Dorsolateral prefrontal cortex (tissue), 120 donors: ENCODE measurements at regions of chr16 and their contacts with region 1.

Region 1: GRCh38 chr16:89490387-89491237 is at the start of gene ANKRD11:
- DNase-seq: peak; percentile 99 to 100 (median 100)
- H3K4me3 ChIP-seq: peak within 1 kb of the TSS; percentile 59 to 100 (median 93)
- H3K27ac ChIP-seq: peak within 1 kb of the TSS in 58 of 59 donors; percentile 5 to 96 (median 87)
- H3K27me3 ChIP-seq: no peaks in the 10 kb centered on the region
- CTCF ChIP-seq: peak in 26 of 56 donors; percentile 6 to 57 (median 22)
- total RNA-seq, gene ANKRD11: 131 to 216 (median 167) TPM

Region 2: DNA sequence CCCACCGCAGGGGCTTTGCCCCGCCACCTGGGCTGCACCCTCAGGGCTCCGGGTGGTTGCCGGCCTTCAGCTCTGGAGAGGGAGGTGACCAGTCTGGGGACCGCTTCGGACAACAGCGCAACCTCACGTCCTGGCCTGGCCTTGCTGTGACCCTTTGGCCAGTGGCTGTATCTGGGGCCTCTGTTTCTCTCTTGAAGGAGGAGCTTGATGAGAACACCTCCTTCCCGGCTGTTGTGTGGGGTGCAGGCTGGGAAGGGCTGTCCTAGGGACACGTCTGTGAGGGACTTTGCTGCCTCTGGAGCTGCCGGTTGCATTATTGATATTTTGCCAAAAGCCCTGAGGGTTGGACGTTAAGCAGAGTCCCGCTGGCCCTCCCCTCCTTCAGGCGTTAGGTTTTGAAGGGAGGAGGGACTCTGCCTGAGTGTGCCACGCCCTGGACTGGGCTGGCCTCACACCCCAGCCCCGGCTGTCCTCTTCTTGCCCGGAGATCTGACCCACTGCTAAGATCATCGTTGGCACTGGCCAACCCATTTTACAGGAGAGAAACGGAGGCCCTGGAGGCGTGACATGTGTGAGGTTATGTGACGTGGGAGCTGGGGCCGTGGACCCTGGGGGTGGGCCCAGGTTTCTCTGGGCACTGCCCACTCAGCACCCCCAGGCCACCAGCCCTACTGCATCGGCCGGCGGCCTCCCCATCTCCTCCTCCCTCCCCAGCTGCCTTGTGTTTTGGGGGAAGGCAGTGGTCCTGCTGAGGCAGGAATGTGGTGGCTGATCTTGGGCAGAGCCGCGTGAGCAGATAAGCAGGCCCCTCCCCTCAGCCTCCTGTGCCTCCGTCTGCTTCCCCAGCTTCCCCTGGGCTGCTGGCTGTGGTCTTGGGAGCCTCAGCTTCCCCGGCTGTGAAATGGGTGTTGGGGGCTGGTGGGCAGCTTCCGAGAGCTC is 1029.0 kb before region 1 on chr16:
- intact Hi-C with region 1: no loop called
- DNase-seq: no peak
- H3K4me3 ChIP-seq: no peak overlapping the region
- H3K27ac ChIP-seq: no peak overlapping the region
- H3K27me3 ChIP-seq: peaks cover 0 to 2% (median 0%) of the 10 kb centered on the region in 45 donors
- CTCF ChIP-seq: no peak

Region 3: GRCh38 chr16:89330177-89330856 is 160.3 kb before region 1 on chr16:
- intact Hi-C with region 1: loop called (anchors 1 to 5 kb)
- DNase-seq: peak in 2 of 10 donors; percentile 25 to 42
- H3K4me3 ChIP-seq: peak overlapping the region in 18 of 59 donors; percentile 3 to 35 (median 20)
- H3K27ac ChIP-seq: peak overlapping the region in 15 of 59 donors; percentile 5 to 72 (median 49)
- H3K27me3 ChIP-seq: no peaks in the 10 kb centered on the region
- CTCF ChIP-seq: no peak

Region 4: GRCh38 chr16:89374393-89374960 is 116.1 kb before region 1 on chr16:
- intact Hi-C with region 1: loop called in 1 of 2 experiments (anchors 10 kb)
- DNase-seq: peak in 7 of 10 donors; percentile 61 to 72 (median 66)
- H3K4me3 ChIP-seq: peak overlapping the region in 3 of 59 donors; percentile 4 to 21 (median 7)
- H3K27ac ChIP-seq: peak overlapping the region in 45 of 59 donors; percentile 1 to 88 (median 77)
- H3K27me3 ChIP-seq: no peaks in the 10 kb centered on the region
- CTCF ChIP-seq: peak in 41 of 56 donors; percentile 16 to 62 (median 40)

Region 5: GRCh38 chr16:89507834-89508590 is 17.4 kb after region 1 on chr16 and contains the start of gene SPG7:
- intact Hi-C with region 1: loop called (anchors 2 kb)
- DNase-seq: peak; percentile 60 to 93 (median 75)
- H3K4me3 ChIP-seq: peak within 1 kb of the TSS; percentile 66 to 100 (median 94)
- H3K27ac ChIP-seq: peak within 1 kb of the TSS; percentile 32 to 95 (median 87)
- H3K27me3 ChIP-seq: no peaks in the 10 kb centered on the region
- CTCF ChIP-seq: peak in 23 of 56 donors; percentile 3 to 56 (median 36)
- total RNA-seq, gene SPG7: 115 to 276 (median 151) TPM